ENCODE measurements at regions of chr1 and their contacts with region 1.

Region 1: GRCh38 chr1:176897350-176898236 is 266.9 kb downstream of the ASTN1 start:
- DNase-seq: peak in 3 of 4 donors; percentile 39 to 70 (median 58)
- ATAC-seq: peak; percentile 91
- H3K4me3 ChIP-seq: no peak overlapping the region
- H3K27ac ChIP-seq: no peak overlapping the region
- H3K4me1 ChIP-seq: peaks cover 0 to 8% of the 10 kb centered on the region in 2 donors
- H3K27me3 ChIP-seq: peaks cover 2 to 61% of the 10 kb centered on the region in 2 donors
- CTCF ChIP-seq: peak; percentile 52 to 63

Region 2: GRCh38 chr1:177082855-177083693 is 185.5 kb after region 1 on chr1:
- intact Hi-C with region 1: no loop called
- DNase-seq: no peak
- ATAC-seq: no peak
- H3K4me3 ChIP-seq: no peak overlapping the region
- H3K27ac ChIP-seq: no peak overlapping the region
- H3K4me1 ChIP-seq: no peaks in the 10 kb centered on the region
- H3K27me3 ChIP-seq: no peaks in the 10 kb centered on the region
- CTCF ChIP-seq: no peak

Region 3: GRCh38 chr1:177181631-177182291 is 284.2 kb after region 1 on chr1:
- intact Hi-C with region 1: loop called in 1 of 2 experiments (anchors 10 kb)
- DNase-seq: peak; percentile 34 to 82 (median 59)
- ATAC-seq: peak; percentile 99
- H3K4me3 ChIP-seq: no peak overlapping the region
- H3K27ac ChIP-seq: no peak overlapping the region
- H3K4me1 ChIP-seq: peaks cover 0 to 4% of the 10 kb centered on the region in 2 donors
- H3K27me3 ChIP-seq: peaks cover 19 to 53% of the 10 kb centered on the region in 2 donors
- CTCF ChIP-seq: peak; percentile 75 to 79

Region 4: DNA sequence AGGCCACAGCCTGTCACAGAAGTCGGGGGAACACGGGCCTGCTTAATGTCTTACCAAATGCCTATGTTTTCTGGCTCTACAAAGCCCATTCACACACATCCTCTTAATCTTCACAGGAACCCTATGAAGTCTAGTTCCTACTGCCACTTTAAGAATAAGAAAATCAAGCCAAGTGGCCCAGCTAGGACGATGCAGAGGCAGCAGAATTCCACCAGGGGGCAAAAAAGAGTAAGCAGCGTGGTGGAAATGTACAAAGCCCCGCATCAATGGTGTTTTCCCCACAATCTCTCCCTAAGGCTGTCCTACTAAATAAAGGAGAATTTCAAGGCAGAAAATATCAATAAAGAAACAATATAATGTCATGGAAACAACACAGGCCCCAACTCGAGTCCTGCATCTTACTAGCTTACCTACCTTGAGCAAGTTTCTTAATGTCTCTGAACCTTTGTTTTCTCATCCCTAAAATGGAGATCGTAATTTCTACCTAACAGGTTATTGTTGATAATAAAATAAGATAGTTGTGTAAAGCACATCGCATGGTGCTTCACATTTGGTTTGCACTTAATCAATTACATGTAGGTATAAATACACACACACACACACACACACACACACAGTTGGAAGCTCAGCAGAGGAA is 1050.9 kb after region 1 on chr1:
- intact Hi-C with region 1: loop called in 1 of 2 experiments (anchors 10 kb)
- DNase-seq: peak in 2 of 4 donors; percentile 59 to 77
- ATAC-seq: peak; percentile 82
- H3K4me3 ChIP-seq: no peak overlapping the region
- H3K27ac ChIP-seq: no peak overlapping the region
- H3K4me1 ChIP-seq: no peaks in the 10 kb centered on the region
- H3K27me3 ChIP-seq: no peaks in the 10 kb centered on the region
- CTCF ChIP-seq: peak; percentile 79 to 85

Measured in left lung (tissue), 14 donors.